Naive thymus-derived CD4-positive, alpha-beta T cell (primary cell): ENCODE measurements at regions of chr7 and their contacts with region 1.

Region 1: DNA sequence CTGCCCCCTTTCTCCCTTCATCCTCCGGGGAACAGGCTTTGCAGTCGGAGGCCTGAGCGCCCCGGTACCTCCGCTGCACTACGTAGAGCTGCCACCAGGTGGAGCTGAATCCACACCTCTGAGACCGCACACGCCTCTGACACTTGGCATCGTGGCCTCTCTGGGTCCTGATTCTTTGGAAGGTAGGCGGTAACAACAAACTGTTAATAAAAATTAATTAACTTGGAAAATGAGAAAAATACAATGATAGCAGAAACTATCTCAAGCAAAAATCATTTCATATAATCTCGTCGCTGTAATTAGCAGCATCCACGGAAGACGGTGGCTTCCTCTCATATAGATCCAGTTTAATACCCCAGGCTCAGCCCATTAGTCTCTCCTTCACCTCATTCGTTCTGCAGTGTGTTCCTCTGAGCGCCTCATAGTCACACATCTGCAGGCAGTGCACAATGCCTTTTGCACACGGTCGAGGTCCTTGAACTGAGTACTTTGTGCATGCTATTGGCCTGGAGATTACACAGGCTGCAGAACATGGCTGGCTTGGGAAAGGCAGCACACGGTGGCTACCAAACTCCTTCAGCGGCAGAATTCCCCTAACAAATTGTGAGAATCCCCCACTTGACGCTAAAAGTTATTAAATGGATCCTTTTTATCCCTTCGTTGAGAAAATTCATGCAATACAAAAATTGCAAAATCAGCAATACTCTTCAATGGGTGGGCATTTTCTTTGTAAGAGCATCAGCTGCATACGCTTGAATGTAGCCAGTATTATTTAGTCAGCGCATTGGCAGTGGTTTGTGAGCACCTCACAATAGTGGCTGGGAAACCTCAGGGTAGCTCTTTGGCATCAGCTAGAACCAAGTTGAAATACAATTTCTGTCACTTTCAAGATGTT is 18.7 kb downstream of the OR9A2 start:
- DNase-seq: peak; percentile 57 to 85 (median 75)
- ATAC-seq: peak; percentile 98
- H3K4me3 ChIP-seq: no peak overlapping the region
- H3K4me3 Mint-ChIP-seq: no peak overlapping the region
- H3K27ac ChIP-seq: no peak overlapping the region
- H3K27ac Mint-ChIP-seq: peak overlapping the region in 1 of 9 donors; percentile 56
- H3K4me1 ChIP-seq: no peaks in the 10 kb centered on the region
- H3K4me1 Mint-ChIP-seq: peaks cover 3 to 8% (median 5%) of the 10 kb centered on the region in 7 donors
- H3K27me3 ChIP-seq: no peaks in the 10 kb centered on the region
- H3K27me3 Mint-ChIP-seq: peaks cover 0 to 24% (median 4%) of the 10 kb centered on the region in 5 donors

Region 2: GRCh38 chr7:142301923-142302550 is 706.2 kb before region 1 on chr7:
- CTCF ChIA-PET with region 1: interaction called, 5 read pairs
- POLR2A ChIA-PET with region 1: no interaction called
- intact Hi-C with region 1: loop called (anchors 1 to 5 kb)
- DNase-seq: peak in 1 of 9 donors; percentile 34
- ATAC-seq: no peak
- H3K4me3 ChIP-seq: no peak overlapping the region
- H3K4me3 Mint-ChIP-seq: peak overlapping the region in 2 of 10 donors; percentile 17 to 49
- H3K27ac ChIP-seq: no peak overlapping the region
- H3K27ac Mint-ChIP-seq: no peak overlapping the region
- H3K4me1 ChIP-seq: peaks cover 0 to 28% of the 10 kb centered on the region in 2 donors
- H3K4me1 Mint-ChIP-seq: peaks cover 7 to 52% (median 35%) of the 10 kb centered on the region in 7 donors
- H3K27me3 ChIP-seq: no peaks in the 10 kb centered on the region
- H3K27me3 Mint-ChIP-seq: peaks cover 4 to 25% (median 16%) of the 10 kb centered on the region in 5 donors

Region 3: GRCh38 chr7:142385491-142386340 is 622.5 kb before region 1 on chr7:
- CTCF ChIA-PET with region 1: no interaction called
- POLR2A ChIA-PET with region 1: no interaction called
- intact Hi-C with region 1: loop called (anchors 2 to 10 kb)
- DNase-seq: peak in 5 of 9 donors; percentile 31 to 45 (median 39)
- ATAC-seq: peak; percentile 80
- H3K4me3 ChIP-seq: no peak overlapping the region
- H3K4me3 Mint-ChIP-seq: peak overlapping the region in 8 of 10 donors; percentile 1 to 75 (median 26)
- H3K27ac ChIP-seq: no peak overlapping the region
- H3K27ac Mint-ChIP-seq: peak overlapping the region in 3 of 9 donors; percentile 61 to 67 (median 63)
- H3K4me1 ChIP-seq: peaks cover 0 to 16% of the 10 kb centered on the region in 2 donors
- H3K4me1 Mint-ChIP-seq: peaks cover 22 to 38% (median 29%) of the 10 kb centered on the region in 7 donors
- H3K27me3 ChIP-seq: no peaks in the 10 kb centered on the region
- H3K27me3 Mint-ChIP-seq: no peaks in the 10 kb centered on the region

Region 4: GRCh38 chr7:142535123-142535779 is 473.0 kb before region 1 on chr7:
- CTCF ChIA-PET with region 1: interaction called, 6 read pairs
- POLR2A ChIA-PET with region 1: interaction called, 3 read pairs
- intact Hi-C with region 1: loop called (anchors 1 kb)
- DNase-seq: peak; percentile 40 to 78 (median 68)
- ATAC-seq: peak; percentile 93
- H3K4me3 ChIP-seq: peak overlapping the region; percentile 10
- H3K4me3 Mint-ChIP-seq: peak overlapping the region; percentile 54 to 87 (median 70)
- H3K27ac ChIP-seq: peak overlapping the region; percentile 47
- H3K27ac Mint-ChIP-seq: peak overlapping the region; percentile 61 to 91 (median 77)
- H3K4me1 ChIP-seq: peaks cover 3 to 31% of the 10 kb centered on the region in 2 donors
- H3K4me1 Mint-ChIP-seq: peaks cover 4 to 38% (median 31%) of the 10 kb centered on the region in 7 donors
- H3K27me3 ChIP-seq: no peaks in the 10 kb centered on the region
- H3K27me3 Mint-ChIP-seq: peaks cover 0 to 5% (median 0%) of the 10 kb centered on the region in 5 donors

Region 5: GRCh38 chr7:142782922-142783900 is 225.0 kb before region 1 on chr7:
- CTCF ChIA-PET with region 1: no interaction called
- POLR2A ChIA-PET with region 1: interaction called, 3 read pairs
- intact Hi-C with region 1: loop called in 1 of 2 experiments (anchors 1 kb)
- DNase-seq: peak; percentile 54 to 84 (median 77)
- ATAC-seq: peak; percentile 74
- H3K4me3 ChIP-seq: peak overlapping the region; percentile 52
- H3K4me3 Mint-ChIP-seq: peak overlapping the region; percentile 70 to 99 (median 86)
- H3K27ac ChIP-seq: peak overlapping the region; percentile 98
- H3K27ac Mint-ChIP-seq: peak overlapping the region; percentile 75 to 100 (median 99)
- H3K4me1 ChIP-seq: peaks cover 0 to 5% of the 10 kb centered on the region in 2 donors
- H3K4me1 Mint-ChIP-seq: peaks cover 0 to 16% (median 10%) of the 10 kb centered on the region in 7 donors
- H3K27me3 ChIP-seq: no peaks in the 10 kb centered on the region
- H3K27me3 Mint-ChIP-seq: no peaks in the 10 kb centered on the region

Region 6: DNA sequence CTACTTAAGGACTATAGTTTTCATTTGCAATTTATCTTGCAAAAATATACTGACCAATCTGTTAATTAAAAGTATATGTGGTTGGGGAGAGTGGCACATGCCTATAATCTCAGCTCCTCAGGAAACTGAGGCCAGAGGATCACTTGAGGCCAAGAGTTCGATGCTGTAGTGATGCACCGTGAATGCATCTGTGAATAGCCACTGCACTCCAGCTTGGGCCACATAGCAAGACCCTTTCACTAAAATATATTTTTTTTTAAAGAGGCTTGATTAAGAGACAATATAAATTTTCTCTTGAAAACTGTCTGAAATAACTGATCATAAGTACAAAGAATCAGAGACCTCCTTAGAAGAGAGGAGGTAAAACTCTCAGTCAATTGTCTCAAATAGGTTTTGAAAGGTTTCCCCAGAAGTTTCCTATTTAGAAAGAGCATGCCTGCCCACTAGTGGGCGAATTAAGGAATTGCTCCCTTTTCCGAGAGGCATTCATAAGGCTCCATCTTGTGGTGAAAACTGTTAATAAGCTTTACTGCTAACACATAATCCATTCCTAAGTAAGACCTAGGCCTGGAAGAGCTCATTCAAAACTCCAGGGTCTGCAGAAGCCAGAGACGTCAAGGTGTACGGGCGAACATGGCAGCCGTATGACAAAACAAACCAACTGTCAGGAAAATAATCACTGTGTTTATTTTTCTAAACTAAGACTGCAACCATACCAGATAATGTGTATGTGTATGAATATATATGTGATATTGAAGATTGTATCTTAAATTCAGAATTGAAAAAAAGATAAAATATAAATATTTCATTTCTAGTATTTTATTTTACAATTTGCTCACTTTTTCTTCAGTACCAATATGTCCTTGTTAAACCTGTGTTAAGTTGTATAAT is 206.8 kb after region 1 on chr7:
- CTCF ChIA-PET with region 1: interaction called, 57 read pairs
- POLR2A ChIA-PET with region 1: interaction called, 3 read pairs
- intact Hi-C with region 1: loop called (anchors 1 kb)
- DNase-seq: peak; percentile 26 to 81 (median 75)
- ATAC-seq: peak; percentile 99
- H3K4me3 ChIP-seq: no peak overlapping the region
- H3K4me3 Mint-ChIP-seq: no peak overlapping the region
- H3K27ac ChIP-seq: no peak overlapping the region
- H3K27ac Mint-ChIP-seq: peak overlapping the region in 1 of 9 donors; percentile 13
- H3K4me1 ChIP-seq: no peaks in the 10 kb centered on the region
- H3K4me1 Mint-ChIP-seq: no peaks in the 10 kb centered on the region
- H3K27me3 ChIP-seq: no peaks in the 10 kb centered on the region
- H3K27me3 Mint-ChIP-seq: peaks cover 0 to 21% (median 4%) of the 10 kb centered on the region in 5 donors

Region 7: GRCh38 chr7:143416565-143417149 is 408.4 kb after region 1 on chr7:
- CTCF ChIA-PET with region 1: no interaction called
- POLR2A ChIA-PET with region 1: no interaction called
- intact Hi-C with region 1: loop called in 1 of 2 experiments (anchors 10 kb)
- DNase-seq: peak in 6 of 9 donors; percentile 34 to 58 (median 52)
- ATAC-seq: peak; percentile 74
- H3K4me3 ChIP-seq: no peak overlapping the region
- H3K4me3 Mint-ChIP-seq: no peak overlapping the region
- H3K27ac ChIP-seq: no peak overlapping the region
- H3K27ac Mint-ChIP-seq: no peak overlapping the region
- H3K4me1 ChIP-seq: peaks cover 0 to 3% of the 10 kb centered on the region in 2 donors
- H3K4me1 Mint-ChIP-seq: peaks cover 2 to 56% (median 46%) of the 10 kb centered on the region in 7 donors
- H3K27me3 ChIP-seq: no peaks in the 10 kb centered on the region
- H3K27me3 Mint-ChIP-seq: peaks cover 0 to 21% (median 0%) of the 10 kb centered on the region in 5 donors